BJ (cell line): ENCODE measurements at regions of chr10 and their contacts with region 1.

Region 1: GRCh38 chr10:68073631-68074403 is 1.3 kb downstream of the HERC4 start:
- DNase-seq: no peak
- H3K4me3 ChIP-seq: peak overlapping the region; percentile 99
- H3K27me3 ChIP-seq: no peaks in the 10 kb centered on the region
- CTCF ChIP-seq: no peak

Region 2: GRCh38 chr10:68103237-68103872 is 29.5 kb after region 1 on chr10:
- CTCF ChIA-PET with region 1: no interaction called
- POLR2A ChIA-PET with region 1: interaction called, 19 read pairs
- DNase-seq: no peak
- H3K4me3 ChIP-seq: no peak overlapping the region
- H3K27me3 ChIP-seq: no peaks in the 10 kb centered on the region
- CTCF ChIP-seq: no peak

Region 3: DNA sequence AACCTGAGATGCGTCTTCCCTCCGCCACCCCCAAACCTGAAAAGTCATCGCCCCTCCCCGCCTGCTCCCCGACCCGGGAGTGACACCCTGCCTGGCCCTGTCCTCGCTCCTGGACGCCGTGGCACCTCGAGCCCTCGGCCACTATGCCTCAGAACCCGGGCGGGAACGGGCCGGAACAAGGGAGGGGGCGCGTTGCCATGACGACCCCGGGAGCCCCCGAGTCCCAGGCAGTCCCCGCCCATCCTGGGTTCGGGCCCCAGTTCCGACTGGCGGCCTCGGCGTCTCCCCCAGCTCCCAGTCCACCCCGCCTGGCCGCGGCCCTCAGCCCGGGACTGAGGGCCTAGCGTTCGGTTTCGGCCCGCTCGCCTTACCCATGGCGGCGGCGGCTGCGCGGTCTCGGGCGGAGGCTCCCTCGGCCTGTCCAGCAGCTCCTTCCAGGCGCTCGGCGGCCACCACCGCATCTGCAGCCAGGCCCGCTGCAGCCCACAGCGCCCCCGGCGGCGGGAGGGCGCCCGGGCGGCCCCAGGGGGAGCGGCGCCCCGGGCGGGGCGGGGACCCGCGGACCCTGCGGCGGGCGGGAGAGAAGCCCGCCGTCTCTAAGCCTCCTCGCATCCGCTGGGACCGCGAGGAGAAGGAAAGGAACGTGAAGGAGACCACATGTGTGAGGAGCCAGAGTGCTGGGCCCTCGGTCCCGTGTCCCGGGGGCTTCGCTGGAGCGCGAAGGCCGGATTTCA is 333.2 kb after region 1 on chr10 and contains the start of gene RUFY2:
- CTCF ChIA-PET with region 1: no interaction called
- POLR2A ChIA-PET with region 1: interaction called, 17 read pairs
- DNase-seq: peak; percentile 12
- H3K4me3 ChIP-seq: peak within 1 kb of the TSS; percentile 100
- H3K27me3 ChIP-seq: no peaks in the 10 kb centered on the region
- CTCF ChIP-seq: no peak; the same call in 1 of the 2 replicates
- polyA plus RNA-seq, gene RUFY2: 6.7 and 15.2 TPM in 2 replicates